Activated B cell treated with CpG ODN at 0.5 μM for 24 hours (primary cell): ENCODE measurements at regions of chr2 and their contacts with region 1.

Region 1: DNA sequence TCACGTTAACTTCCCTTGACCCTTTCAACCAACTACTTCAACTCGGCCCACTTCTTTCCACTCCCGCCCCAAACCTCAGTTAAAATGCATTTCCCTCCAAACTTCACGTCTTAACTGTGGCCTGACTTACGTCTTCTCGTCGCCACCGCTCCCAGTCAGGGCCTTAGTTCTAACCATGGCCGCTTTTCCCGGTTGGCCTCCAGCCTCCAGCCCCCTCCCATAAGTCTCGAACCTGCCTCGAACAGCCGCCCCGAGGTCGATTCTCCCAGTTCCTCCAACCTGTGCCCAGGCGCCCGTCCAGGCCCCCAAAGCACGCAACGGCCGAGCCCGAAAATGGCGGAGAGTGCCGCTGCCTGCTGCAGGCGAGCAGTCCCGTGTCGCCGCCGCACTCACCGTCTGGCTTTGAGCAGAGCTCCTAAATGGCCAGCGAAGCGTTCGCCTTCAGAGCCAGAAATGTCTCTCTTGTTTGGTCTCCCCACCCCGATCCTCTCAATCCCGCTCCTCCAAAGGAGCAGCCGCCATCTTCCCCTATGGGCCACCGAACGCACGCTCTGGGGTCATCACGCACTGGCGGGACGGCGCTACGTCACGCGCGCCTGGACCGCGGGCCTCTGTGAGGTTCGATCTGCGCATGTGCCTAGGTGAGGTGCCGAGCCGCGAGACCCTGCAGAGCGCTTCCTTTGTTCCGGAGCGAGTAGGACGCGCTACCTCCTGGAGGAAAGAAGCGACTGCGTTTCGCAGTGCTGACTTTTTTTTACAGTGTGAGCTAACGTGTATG is at the start of gene WDR33:
- DNase-seq: peak; percentile 88
- ATAC-seq: peak; percentile 96
- H3K4me3 Mint-ChIP-seq: peak within 1 kb of the TSS; percentile 89
- H3K27ac Mint-ChIP-seq: peak within 1 kb of the TSS; percentile 99
- H3K4me1 Mint-ChIP-seq: peaks cover 56% of the 10 kb centered on the region
- H3K27me3 Mint-ChIP-seq: no peaks in the 10 kb centered on the region
- CTCF ChIP-seq: no peak
- total RNA-seq, gene WDR33: 83.0 and 93.0 TPM in 2 replicates

Region 2: DNA sequence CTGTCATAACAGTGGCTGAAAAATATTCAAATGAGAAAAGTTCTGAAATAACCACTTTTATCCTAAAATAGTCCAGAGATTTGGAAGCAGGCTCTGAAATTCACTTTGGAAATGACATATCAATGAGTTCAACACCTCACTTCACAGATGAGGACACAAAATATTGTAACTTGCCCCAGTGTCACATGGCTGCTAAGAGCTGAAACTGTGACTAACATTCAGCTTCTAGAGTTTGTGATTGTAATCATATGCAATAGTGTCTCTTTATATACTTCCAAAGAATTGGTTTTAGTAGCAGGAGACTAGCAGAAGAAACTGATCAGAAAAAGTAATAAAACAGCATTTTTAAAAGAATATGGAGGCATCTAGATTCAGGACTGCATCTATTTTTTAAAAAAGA is 57.4 kb before region 1 on chr2:
- CTCF ChIA-PET with region 1: no interaction called
- POLR2A ChIA-PET with region 1: interaction called, 8 read pairs
- intact Hi-C with region 1: loop called (anchors 1 kb)
- DNase-seq: no peak
- ATAC-seq: no peak
- H3K4me3 Mint-ChIP-seq: no peak overlapping the region
- H3K27ac Mint-ChIP-seq: no peak overlapping the region
- H3K4me1 Mint-ChIP-seq: peaks cover 21% of the 10 kb centered on the region
- H3K27me3 Mint-ChIP-seq: no peaks in the 10 kb centered on the region
- CTCF ChIP-seq: no peak

Region 3: DNA sequence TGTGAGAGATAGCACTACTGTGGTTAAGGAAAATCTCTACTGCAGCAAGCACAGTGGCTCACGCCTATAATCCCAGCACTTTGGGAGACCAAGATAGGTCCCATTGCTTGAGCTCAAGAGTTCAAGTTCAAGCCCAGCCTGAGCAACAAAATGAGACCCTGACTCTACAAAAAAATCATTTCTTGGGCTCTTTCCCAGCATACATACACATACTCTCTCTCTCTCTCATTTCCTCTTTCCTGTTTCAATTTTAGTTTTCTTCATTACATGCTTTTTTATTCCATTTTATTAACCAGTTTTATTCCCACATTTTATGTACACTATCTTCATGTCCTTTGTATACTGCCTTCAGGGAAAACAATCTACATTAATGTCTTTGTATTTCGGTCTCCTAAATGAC is 14.4 kb before region 1 on chr2:
- CTCF ChIA-PET with region 1: no interaction called
- POLR2A ChIA-PET with region 1: interaction called, 5 read pairs
- intact Hi-C with region 1: loop called (anchors 1 kb)
- DNase-seq: no peak
- ATAC-seq: peak; percentile 18
- H3K4me3 Mint-ChIP-seq: peak overlapping the region; percentile 69
- H3K27ac Mint-ChIP-seq: peak overlapping the region; percentile 84
- H3K4me1 Mint-ChIP-seq: peaks cover 76% of the 10 kb centered on the region
- H3K27me3 Mint-ChIP-seq: no peaks in the 10 kb centered on the region
- CTCF ChIP-seq: no peak

Region 4: DNA sequence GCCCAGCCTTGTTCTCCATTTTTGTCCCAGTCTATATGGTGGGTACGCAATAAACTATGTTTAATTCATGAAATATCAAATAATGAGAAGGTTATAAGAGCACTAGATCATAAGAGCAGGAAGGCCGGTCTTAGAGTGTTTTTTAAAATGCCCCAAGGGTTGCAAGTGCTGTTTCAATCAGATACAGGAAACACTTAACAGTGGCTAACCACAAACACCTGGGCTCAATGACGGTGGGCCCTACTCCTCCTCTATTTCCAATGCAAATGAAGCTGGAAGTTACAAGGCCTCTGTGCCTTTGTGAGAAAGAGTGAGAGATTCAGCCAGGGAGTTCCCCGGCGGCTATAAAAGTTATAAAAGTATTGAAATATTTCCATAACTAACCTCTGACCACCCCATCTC is 19.0 kb after region 1 on chr2:
- CTCF ChIA-PET with region 1: interaction called, 3 read pairs
- POLR2A ChIA-PET with region 1: interaction called, 21 read pairs
- intact Hi-C with region 1: loop called (anchors 1 kb)
- DNase-seq: peak; percentile 57
- ATAC-seq: peak; percentile 94
- H3K4me3 Mint-ChIP-seq: peak overlapping the region; percentile 66
- H3K27ac Mint-ChIP-seq: peak overlapping the region; percentile 84
- H3K4me1 Mint-ChIP-seq: peaks cover 43% of the 10 kb centered on the region
- H3K27me3 Mint-ChIP-seq: peaks cover 12% of the 10 kb centered on the region
- CTCF ChIP-seq: no peak